ENCODE measurements at regions of chr12 and their contacts with region 1.

Region 1: GRCh38 chr12:50055831-50056638 is 1.4 kb upstream of the ASIC1 start:
- DNase-seq: peak; percentile 72
- ATAC-seq: peak; percentile 34
- H3K4me3 Mint-ChIP-seq: peak overlapping the region; percentile 39
- H3K27ac Mint-ChIP-seq: no peak overlapping the region
- H3K4me1 Mint-ChIP-seq: peaks cover 42% of the 10 kb centered on the region
- H3K27me3 Mint-ChIP-seq: peaks cover 36% of the 10 kb centered on the region

Region 2: DNA sequence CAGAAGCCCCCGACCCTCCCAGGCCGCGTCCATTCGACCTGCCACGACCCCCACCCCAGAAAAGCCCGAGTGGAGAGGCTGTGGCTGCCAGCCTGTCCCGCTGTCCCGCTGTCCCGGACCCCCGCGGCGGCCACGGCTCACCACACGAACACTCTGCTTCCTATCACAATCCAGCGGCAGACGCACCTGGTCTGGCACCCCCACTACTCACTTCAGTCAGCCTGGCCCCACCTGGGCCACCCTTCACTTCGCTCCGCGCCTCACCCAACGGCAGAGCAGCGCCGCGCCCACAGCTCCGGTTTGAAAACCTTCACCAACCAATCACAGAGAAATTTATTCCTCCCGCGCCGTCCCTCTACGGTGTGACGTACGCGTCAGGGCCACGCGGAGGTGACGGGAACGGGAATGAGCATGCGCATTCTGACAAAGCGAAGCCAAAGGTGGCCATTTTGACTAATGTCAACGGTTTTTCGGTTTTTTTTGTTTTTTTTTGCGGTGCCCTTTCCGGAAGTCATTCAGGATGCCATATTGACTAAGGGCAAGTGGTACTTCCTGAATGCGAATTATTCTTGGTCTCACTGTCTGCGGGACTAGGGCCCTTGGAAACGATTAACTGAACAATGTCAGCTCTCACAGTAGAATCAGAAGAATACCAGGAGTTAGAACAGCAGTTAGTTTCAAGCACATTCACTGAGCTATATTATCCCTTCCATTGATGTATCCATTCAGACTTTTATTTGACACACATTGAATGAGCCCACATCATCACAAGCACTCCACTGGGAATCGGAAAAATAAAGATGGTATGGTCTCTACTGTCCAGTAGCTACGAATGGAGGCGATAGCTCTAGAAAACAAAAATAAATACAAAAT is 30.6 kb before region 1 on chr12 and contains the start of gene RACGAP1:
- CTCF ChIA-PET with region 1: interaction called, 10 read pairs
- DNase-seq: peak; percentile 99
- ATAC-seq: peak; percentile 98
- H3K4me3 Mint-ChIP-seq: peak within 1 kb of the TSS; percentile 91
- H3K27ac Mint-ChIP-seq: peak within 1 kb of the TSS; percentile 96
- H3K4me1 Mint-ChIP-seq: peaks cover 38% of the 10 kb centered on the region
- H3K27me3 Mint-ChIP-seq: no peaks in the 10 kb centered on the region
- total RNA-seq, gene RACGAP1: 180 to 198 TPM

Region 3: DNA sequence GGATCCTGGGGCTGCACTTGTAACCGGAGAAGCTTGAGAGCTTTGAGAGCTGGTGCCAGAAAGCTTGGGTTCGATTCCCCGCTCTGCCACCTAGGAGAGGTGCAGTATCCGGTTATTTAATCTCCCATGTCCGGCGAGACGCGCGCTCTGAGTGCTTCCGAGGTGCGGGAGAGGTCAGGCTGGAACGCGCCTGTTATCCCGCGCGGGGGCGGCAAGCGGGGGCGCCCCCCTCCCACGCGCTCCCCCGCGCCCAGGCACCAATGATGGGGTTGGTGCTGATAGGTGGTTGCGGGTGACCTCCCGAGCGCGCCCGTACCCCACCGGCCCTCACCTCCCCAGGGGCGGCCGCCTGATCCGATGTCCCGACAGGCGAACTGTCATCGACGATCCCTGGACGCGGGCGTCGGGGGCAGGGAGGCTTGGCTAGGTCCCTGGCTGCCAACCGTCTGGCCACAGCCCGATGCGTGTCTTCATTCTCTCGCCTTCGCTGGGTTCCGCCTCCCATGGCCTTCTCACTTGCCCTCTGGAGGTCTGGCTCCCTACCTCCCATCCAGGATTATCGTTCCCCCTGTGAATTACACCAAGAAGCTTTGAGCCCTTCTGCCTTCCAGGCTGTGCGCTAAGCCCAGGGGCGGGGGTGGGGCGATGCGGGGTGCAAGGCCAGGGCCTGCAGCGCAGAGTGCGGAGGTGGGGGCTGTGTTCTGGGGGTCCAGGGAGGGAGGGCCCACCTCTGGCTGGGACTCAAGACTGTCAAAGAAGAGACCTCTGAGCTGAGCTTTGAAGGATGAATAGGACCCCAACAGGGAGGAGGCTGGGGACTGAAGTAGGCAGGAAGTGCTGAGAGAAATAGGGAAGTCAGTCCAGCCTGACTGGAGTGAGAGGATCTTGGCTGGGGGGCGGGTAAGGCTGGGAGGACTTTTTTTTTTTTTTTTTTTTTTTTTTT is 23.1 kb before region 1 on chr12:
- CTCF ChIA-PET with region 1: interaction called, 124 read pairs
- DNase-seq: no peak
- ATAC-seq: no peak
- H3K4me3 Mint-ChIP-seq: peak overlapping the region; percentile 28
- H3K27ac Mint-ChIP-seq: no peak overlapping the region
- H3K4me1 Mint-ChIP-seq: no peaks in the 10 kb centered on the region
- H3K27me3 Mint-ChIP-seq: peaks cover 29% of the 10 kb centered on the region

Region 4: GRCh38 chr12:50043854-50044253 is 12.2 kb before region 1 on chr12:
- CTCF ChIA-PET with region 1: interaction called, 124 read pairs
- DNase-seq: no peak
- ATAC-seq: no peak
- H3K4me3 Mint-ChIP-seq: no peak overlapping the region
- H3K27ac Mint-ChIP-seq: no peak overlapping the region
- H3K4me1 Mint-ChIP-seq: peaks cover 15% of the 10 kb centered on the region
- H3K27me3 Mint-ChIP-seq: peaks cover 6% of the 10 kb centered on the region

Region 5: GRCh38 chr12:50074936-50075807 is 19.1 kb after region 1 on chr12:
- CTCF ChIA-PET with region 1: interaction called, 92 read pairs
- DNase-seq: peak; percentile 86
- ATAC-seq: peak; percentile 95
- H3K4me3 Mint-ChIP-seq: no peak overlapping the region
- H3K27ac Mint-ChIP-seq: peak overlapping the region; percentile 42
- H3K4me1 Mint-ChIP-seq: peaks cover 10% of the 10 kb centered on the region
- H3K27me3 Mint-ChIP-seq: no peaks in the 10 kb centered on the region